ENCODE measurements at regions of chr10 and their contacts with region 1.

Region 1: GRCh38 chr10:59234816-59235429 is 58.5 kb downstream of the PHYHIPL start:
- DNase-seq: no peak
- ATAC-seq: no peak
- H3K4me3 ChIP-seq: no peak overlapping the region
- H3K27ac ChIP-seq: no peak overlapping the region
- H3K4me1 ChIP-seq: no peaks in the 10 kb centered on the region
- H3K27me3 ChIP-seq: no peaks in the 10 kb centered on the region
- CTCF ChIP-seq: peak; percentile 59

Region 2: DNA sequence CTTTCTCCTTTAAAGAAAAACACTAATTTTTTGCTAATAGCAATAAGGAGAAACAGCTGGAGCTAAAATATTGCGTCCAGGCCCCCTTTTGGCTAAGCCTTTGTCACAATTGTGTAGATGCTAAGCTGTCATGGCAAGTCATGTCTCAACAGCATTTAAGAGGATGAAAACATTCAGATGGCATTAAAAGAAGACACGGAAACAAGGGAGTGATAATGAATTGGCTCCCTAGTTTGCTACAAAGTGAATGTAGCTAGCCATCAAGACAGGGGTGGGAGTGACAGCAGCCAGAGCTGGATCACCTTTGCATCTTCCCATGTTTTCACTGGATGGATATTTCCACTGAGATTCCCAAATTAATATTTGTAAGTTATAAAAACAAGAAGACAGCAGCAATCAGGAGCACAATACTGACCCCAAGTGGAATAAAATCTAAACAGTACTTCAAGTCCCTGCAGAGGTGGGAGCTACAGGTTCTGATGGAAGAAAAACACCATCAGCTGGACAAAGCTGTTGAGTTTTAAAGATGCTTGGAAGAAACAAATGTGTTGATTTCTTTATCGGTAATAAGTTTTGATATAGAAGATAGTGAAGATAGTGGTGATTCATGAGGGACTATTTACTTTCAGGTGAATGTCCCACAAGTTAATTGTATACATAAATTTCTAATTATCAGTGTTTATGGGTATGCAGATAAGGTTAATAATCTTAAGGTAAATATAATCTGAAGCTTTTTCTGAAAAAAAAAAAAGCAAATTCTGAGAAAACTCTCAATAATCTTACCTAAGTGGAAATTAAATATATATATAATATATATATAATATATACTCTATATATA is 345.3 kb after region 1 on chr10:
- intact Hi-C with region 1: loop called (anchors 10 kb)
- DNase-seq: no peak
- ATAC-seq: no peak
- H3K4me3 ChIP-seq: no peak overlapping the region
- H3K27ac ChIP-seq: no peak overlapping the region
- H3K4me1 ChIP-seq: no peaks in the 10 kb centered on the region
- H3K27me3 ChIP-seq: no peaks in the 10 kb centered on the region
- CTCF ChIP-seq: peak; percentile 41